PC-9 (cell line): ENCODE measurements at regions of chr7 and their contacts with region 1.

Region 1: DNA sequence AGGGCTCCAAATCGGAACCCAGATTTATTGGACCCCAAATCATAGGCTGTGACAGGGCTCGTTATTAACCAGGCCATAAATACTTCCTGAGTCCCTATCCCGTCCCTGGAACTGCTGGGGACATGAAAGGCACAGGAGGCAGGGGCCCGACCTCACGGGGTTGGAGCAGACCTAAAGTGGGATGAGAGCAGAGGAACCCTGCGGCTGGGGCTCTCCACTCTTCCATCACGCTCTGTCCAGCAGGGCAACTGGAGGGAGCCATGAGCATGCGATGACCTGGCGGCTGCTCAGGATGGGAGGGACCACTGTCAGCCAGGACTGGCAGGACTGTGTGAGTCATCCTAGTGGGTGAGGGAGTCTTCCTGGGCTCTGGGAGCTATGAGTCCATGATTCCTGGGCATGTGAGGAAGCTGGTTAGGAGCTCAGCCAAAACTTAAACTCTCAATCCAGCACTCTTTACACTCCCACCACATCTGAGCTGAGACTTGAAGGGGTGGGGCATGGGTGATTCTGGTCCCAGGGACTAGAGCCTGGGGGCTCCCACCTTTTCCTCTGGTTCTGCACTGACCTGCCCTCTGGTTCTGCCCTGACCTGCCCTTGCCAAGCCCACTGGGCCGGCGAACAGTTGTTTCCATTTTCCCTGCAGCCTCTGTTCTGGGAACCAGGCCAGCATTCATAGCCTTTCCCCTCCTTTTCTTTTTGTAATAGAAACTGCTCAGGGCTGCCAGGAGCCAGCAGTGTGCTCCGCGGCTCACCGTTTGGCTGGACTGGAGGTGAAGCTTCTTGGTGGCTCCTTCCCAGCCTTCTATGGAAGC is 47.1 kb downstream of the SYPL1 start:
- DNase-seq: peak; percentile 93 to 97
- H3K4me3 ChIP-seq: peak overlapping the region; percentile 63
- H3K27ac ChIP-seq: peak overlapping the region; percentile 98
- H3K4me1 ChIP-seq: peaks cover 85% of the 10 kb centered on the region
- H3K27me3 ChIP-seq: no peaks in the 10 kb centered on the region
- CTCF ChIP-seq: no peak

Region 2: GRCh38 chr7:106050011-106050745 is 14.8 kb before region 1 on chr7:
- CTCF ChIA-PET with region 1: interaction called, 4 read pairs
- POLR2A ChIA-PET with region 1: interaction called, 14 read pairs
- intact Hi-C with region 1: no loop called
- DNase-seq: peak in 1 of 2 experiments; percentile 32
- H3K4me3 ChIP-seq: no peak overlapping the region
- H3K27ac ChIP-seq: no peak overlapping the region
- H3K4me1 ChIP-seq: no peaks in the 10 kb centered on the region
- H3K27me3 ChIP-seq: 0 out of 2 replicates have a peak, but pooled peaks cover 7% of the 10 kb centered on the region
- CTCF ChIP-seq: 0 out of 2 replicates have a peak, but pooled peaks have one; percentile 18